Posterior cingulate gyrus (tissue), 11 donors: ENCODE measurements at regions of chr7 and their contacts with region 1.

Region 1: GRCh38 chr7:135170274-135170997 is at the start of gene CYREN:
- DNase-seq: peak; percentile 87 to 98 (median 92)

Region 2: GRCh38 chr7:134986363-134987251 is 183.8 kb before region 1 on chr7 and contains the start of gene AGBL3:
- intact Hi-C with region 1: loop called (anchors 1 kb)
- DNase-seq: peak; percentile 80 to 99 (median 92)

Region 3: GRCh38 chr7:135251496-135252391 is 81.3 kb after region 1 on chr7:
- intact Hi-C with region 1: no loop called
- DNase-seq: no peak